BJ (cell line): ENCODE measurements at regions of chr10 and their contacts with region 1.

Region 1: DNA sequence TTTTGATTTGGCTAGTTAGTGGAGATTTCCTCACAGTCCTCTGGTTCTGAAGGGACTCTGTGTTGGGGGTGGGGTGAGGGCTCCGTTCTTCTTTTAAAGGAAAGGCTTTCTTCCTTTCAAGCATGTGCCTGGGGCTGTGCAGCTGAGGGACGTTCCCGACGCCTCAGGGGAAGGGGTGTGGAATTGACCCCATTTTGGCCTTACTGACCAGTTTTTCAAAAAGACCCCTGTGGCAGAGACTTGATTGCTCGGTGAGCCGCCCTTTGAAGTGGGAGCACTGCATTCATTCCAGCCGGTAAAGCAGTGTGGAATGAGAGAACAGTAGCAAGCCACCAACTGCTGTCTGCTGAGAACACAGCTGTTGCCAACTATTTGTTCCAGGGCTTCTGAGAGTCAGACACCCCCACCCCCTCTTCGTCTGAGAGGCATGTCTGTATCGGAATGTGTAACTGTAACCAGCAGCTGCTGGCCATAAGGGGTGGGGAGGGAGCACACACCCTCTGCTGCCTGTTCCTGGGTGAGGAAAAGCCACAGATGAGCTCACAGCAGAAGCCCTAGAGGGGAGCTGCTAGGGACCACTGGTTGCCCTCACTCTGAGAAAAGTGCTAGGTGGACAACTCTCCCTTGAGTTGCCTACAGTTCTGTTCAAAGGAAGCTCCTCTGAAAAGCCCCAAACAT is 33.2 kb downstream of the WBP1L start:
- DNase-seq: peak; percentile 93
- H3K4me3 ChIP-seq: no peak overlapping the region
- H3K27me3 ChIP-seq: no peaks in the 10 kb centered on the region
- CTCF ChIP-seq: peak; percentile 24; the same call in 1 of the 2 replicates

Region 2: GRCh38 chr10:102660888-102661657 is 115.8 kb before region 1 on chr10:
- CTCF ChIA-PET with region 1: interaction called, 4 read pairs
- POLR2A ChIA-PET with region 1: interaction called, 25 read pairs
- DNase-seq: peak; percentile 24
- H3K4me3 ChIP-seq: no peak overlapping the region
- H3K27me3 ChIP-seq: no peaks in the 10 kb centered on the region
- CTCF ChIP-seq: no peak

Region 3: GRCh38 chr10:102752934-102753664 is 23.8 kb before region 1 on chr10:
- CTCF ChIA-PET with region 1: interaction called, 24 read pairs
- POLR2A ChIA-PET with region 1: no interaction called
- DNase-seq: no peak
- H3K4me3 ChIP-seq: no peak overlapping the region
- H3K27me3 ChIP-seq: no peaks in the 10 kb centered on the region
- CTCF ChIP-seq: peak; percentile 69

Region 4: DNA sequence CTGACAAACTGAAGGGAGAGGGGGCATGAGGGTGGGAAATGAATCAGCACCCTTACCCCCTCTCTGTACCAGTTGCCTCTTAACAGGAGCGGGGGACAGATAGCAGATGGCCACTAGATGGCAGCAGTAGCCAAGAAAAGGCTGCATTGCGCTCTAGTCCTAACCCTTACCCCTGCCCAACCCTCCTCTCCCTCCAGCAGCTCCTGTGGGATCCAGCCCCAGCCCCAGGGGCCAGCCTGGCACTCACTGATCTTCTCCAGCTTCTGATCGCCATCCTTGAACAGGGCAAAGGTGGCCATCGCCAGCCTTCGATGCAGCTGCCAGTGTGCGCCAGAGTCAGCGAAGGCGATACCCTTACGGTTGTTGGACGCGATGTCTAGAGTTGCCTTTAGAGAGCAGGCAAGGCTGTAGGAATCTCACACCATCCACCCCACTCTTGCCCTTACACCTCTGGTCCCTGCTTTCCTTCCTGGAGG is 58.1 kb after region 1 on chr10:
- CTCF ChIA-PET with region 1: no interaction called
- POLR2A ChIA-PET with region 1: no interaction called
- DNase-seq: no peak
- H3K4me3 ChIP-seq: no peak overlapping the region
- H3K27me3 ChIP-seq: peaks cover 4% of the 10 kb centered on the region
- CTCF ChIP-seq: peak; percentile 86